ENCODE measurements at regions of chr21 and their contacts with region 1.

Region 1: GRCh38 chr21:35226948-35227744 is 178.0 kb upstream of the RUNX1 start:
- DNase-seq: peak; percentile 85
- H3K4me3 Mint-ChIP-seq: peak overlapping the region; percentile 46
- H3K27ac Mint-ChIP-seq: peak overlapping the region; percentile 70
- H3K4me1 Mint-ChIP-seq: peaks cover 30% of the 10 kb centered on the region
- H3K27me3 Mint-ChIP-seq: no peaks in the 10 kb centered on the region

Region 2: GRCh38 chr21:34807146-34807880 is 419.8 kb before region 1 on chr21:
- intact Hi-C with region 1: loop called (anchors 10 kb)
- DNase-seq: peak; percentile 84
- H3K4me3 Mint-ChIP-seq: peak overlapping the region; percentile 57
- H3K27ac Mint-ChIP-seq: peak overlapping the region; percentile 94
- H3K4me1 Mint-ChIP-seq: peaks cover 66% of the 10 kb centered on the region
- H3K27me3 Mint-ChIP-seq: no peaks in the 10 kb centered on the region

Region 3: GRCh38 chr21:35106246-35106835 is 120.8 kb before region 1 on chr21:
- intact Hi-C with region 1: no loop called
- DNase-seq: no peak
- H3K4me3 Mint-ChIP-seq: no peak overlapping the region
- H3K27ac Mint-ChIP-seq: no peak overlapping the region
- H3K4me1 Mint-ChIP-seq: no peaks in the 10 kb centered on the region
- H3K27me3 Mint-ChIP-seq: no peaks in the 10 kb centered on the region

Region 4: DNA sequence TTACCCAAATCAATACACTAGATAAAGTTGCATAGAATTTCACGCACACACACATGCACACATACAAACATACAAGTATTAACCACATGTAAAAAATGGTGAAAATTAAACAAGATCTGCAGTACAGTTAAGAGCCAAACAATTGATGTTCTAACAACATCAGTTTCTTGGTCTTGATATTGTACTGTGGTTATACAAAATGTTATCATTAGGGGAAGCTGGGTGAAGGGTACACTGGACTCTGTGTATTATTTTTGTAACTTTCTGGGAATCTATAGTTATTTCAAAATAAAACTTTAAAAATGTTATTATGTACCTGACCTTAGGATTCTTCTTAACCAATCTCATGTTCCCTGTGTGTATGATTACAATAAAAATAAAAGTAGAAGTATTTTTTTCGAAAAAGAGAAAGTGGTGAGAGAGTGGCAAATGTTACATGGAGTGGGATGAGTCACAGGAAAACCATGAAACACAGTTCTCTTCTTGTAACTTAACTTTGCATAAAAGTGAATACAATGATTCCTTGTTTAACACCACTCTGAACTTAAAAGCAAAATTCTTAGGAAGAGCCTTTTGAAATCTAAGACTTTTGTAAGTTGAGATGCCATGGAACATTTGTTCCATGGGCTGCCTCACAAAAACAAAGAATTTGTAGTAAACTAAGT is 76.5 kb before region 1 on chr21:
- intact Hi-C with region 1: loop called (anchors 2 kb)
- DNase-seq: no peak
- H3K4me3 Mint-ChIP-seq: peak overlapping the region; percentile 48
- H3K27ac Mint-ChIP-seq: peak overlapping the region; percentile 92
- H3K4me1 Mint-ChIP-seq: peaks cover 33% of the 10 kb centered on the region
- H3K27me3 Mint-ChIP-seq: no peaks in the 10 kb centered on the region